ENCODE measurements at regions of chr3 and their contacts with region 1.

Region 1: DNA sequence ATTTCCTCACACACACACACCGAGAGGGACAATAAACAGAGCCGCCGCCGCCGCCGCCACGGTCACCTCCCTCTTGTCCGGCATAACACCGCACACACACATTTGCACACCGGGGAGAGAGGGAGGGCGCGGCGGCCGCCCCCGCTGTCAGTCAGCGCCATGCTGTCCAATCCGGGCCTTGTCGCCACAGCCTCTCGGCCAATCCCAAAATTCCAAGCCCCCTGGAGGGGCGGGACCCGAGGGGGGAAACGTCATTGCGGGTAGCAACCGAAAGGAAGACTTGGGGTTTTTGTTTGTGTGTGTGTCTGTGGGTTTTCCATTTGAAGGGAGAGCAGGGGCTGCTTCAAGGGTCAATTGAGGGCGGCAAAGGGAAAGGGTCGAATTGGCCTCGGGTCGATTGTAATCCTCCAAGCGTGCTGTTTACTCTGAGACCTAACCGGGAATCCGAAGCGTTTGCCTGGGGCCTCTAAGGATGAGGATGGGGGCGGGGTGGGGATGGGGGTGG is at the start of gene TOP2B:
- DNase-seq: peak; percentile 97
- ATAC-seq: peak; percentile 93
- H3K4me3 ChIP-seq: peak within 1 kb of the TSS; percentile 86
- H3K27ac ChIP-seq: peak within 1 kb of the TSS; percentile 39
- H3K4me1 ChIP-seq: peaks cover 14% of the 10 kb centered on the region
- H3K27me3 ChIP-seq: no peaks in the 10 kb centered on the region
- CTCF ChIP-seq: no peak
- total RNA-seq, gene TOP2B: 79.0 and 107 TPM in 2 replicates

Region 2: DNA sequence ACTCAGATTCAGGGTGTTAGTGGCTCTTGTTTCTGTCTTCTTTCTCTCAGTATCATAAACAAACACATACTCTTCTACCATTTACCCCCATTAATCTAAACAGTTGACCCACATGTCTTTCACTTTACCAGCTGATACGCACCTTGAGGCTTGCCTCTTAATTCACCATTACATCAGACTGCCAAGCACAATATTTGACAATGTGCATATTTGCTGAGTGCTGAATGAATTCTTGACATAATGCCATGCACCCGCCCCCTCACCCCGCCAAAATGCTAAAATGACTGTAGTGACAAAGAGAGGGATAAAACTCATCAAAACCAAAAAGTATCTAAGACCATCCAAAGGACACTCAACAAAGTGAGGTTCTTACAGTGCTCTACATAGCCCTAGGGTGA is 61.0 kb after region 1 on chr3:
- CTCF ChIA-PET with region 1: no interaction called
- POLR2A ChIA-PET with region 1: no interaction called
- intact Hi-C with region 1: loop called (anchors 5 kb)
- DNase-seq: peak; percentile 27
- ATAC-seq: peak; percentile 31; the same call in 1 of the 2 replicates
- H3K4me3 ChIP-seq: no peak overlapping the region
- H3K27ac ChIP-seq: 0 out of 2 replicates have a peak overlapping the region, but pooled peaks have one; percentile 2
- H3K4me1 ChIP-seq: peaks cover 15% of the 10 kb centered on the region
- H3K27me3 ChIP-seq: no peaks in the 10 kb centered on the region
- CTCF ChIP-seq: no peak

Region 3: DNA sequence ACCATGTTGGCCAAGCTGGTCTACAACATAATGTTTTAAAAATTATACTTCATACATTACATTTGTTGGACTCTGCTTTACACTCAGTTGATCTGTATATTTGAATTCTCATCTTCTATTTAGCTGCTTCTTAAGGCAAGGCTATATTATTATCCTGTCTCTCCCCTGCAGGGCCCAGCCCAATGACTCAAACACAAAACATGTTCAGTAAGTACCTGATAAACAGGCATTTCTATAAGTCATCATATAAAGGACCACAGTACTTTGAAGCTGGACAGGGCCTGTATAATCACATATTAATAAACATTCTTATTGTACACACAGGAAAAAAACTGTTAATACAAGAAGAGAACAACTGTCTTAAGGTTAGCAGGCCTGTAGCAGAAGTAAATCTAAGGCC is 82.2 kb after region 1 on chr3:
- CTCF ChIA-PET with region 1: no interaction called
- POLR2A ChIA-PET with region 1: no interaction called
- intact Hi-C with region 1: loop called (anchors 5 kb)
- DNase-seq: peak; percentile 79
- ATAC-seq: peak; percentile 99
- H3K4me3 ChIP-seq: no peak overlapping the region
- H3K27ac ChIP-seq: no peak overlapping the region
- H3K4me1 ChIP-seq: peaks cover 16% of the 10 kb centered on the region
- H3K27me3 ChIP-seq: no peaks in the 10 kb centered on the region
- CTCF ChIP-seq: no peak

Region 4: GRCh38 chr3:25782938-25783660 is 118.2 kb after region 1 on chr3 and contains the start of gene NGLY1:
- CTCF ChIA-PET with region 1: no interaction called
- POLR2A ChIA-PET with region 1: interaction called, 5 read pairs
- intact Hi-C with region 1: loop called (anchors 2 kb)
- DNase-seq: peak; percentile 83
- ATAC-seq: peak; percentile 90
- H3K4me3 ChIP-seq: peak within 1 kb of the TSS; percentile 87
- H3K27ac ChIP-seq: peak within 1 kb of the TSS; percentile 40
- H3K4me1 ChIP-seq: peaks cover 31% of the 10 kb centered on the region
- H3K27me3 ChIP-seq: no peaks in the 10 kb centered on the region
- CTCF ChIP-seq: no peak
- total RNA-seq, gene NGLY1: 47.7 and 49.4 TPM in 2 replicates

Region 5: GRCh38 chr3:25831578-25831977 is 166.7 kb after region 1 on chr3:
- CTCF ChIA-PET with region 1: no interaction called
- POLR2A ChIA-PET with region 1: interaction called, 6 read pairs
- intact Hi-C with region 1: loop called (anchors 1 kb)
- DNase-seq: peak; percentile 46
- ATAC-seq: peak; percentile 94
- H3K4me3 ChIP-seq: no peak overlapping the region
- H3K27ac ChIP-seq: no peak overlapping the region
- H3K4me1 ChIP-seq: no peaks in the 10 kb centered on the region
- H3K27me3 ChIP-seq: no peaks in the 10 kb centered on the region; the same call in 1 of the 2 replicates
- CTCF ChIP-seq: peak; percentile 53